Activated B cell treated with CpG ODN at 0.5 μM for 24 hours (primary cell): ENCODE measurements at regions of chr5 and their contacts with region 1.

Region 1: GRCh38 chr5:59620535-59621212 is 272.9 kb downstream of the PDE4D start:
- DNase-seq: no peak
- ATAC-seq: peak; percentile 37
- H3K4me3 Mint-ChIP-seq: no peak overlapping the region
- H3K27ac Mint-ChIP-seq: peak overlapping the region; percentile 14
- H3K4me1 Mint-ChIP-seq: peaks cover 24% of the 10 kb centered on the region
- H3K27me3 Mint-ChIP-seq: no peaks in the 10 kb centered on the region
- CTCF ChIP-seq: no peak

Region 2: GRCh38 chr5:59562756-59563389 is 57.8 kb before region 1 on chr5:
- CTCF ChIA-PET with region 1: no interaction called
- POLR2A ChIA-PET with region 1: no interaction called
- intact Hi-C with region 1: no loop called
- DNase-seq: peak; percentile 60
- ATAC-seq: peak; percentile 91
- H3K4me3 Mint-ChIP-seq: peak overlapping the region; percentile 65
- H3K27ac Mint-ChIP-seq: peak overlapping the region; percentile 91
- H3K4me1 Mint-ChIP-seq: peaks cover 81% of the 10 kb centered on the region
- H3K27me3 Mint-ChIP-seq: no peaks in the 10 kb centered on the region
- CTCF ChIP-seq: no peak

Region 3: GRCh38 chr5:59637878-59638580 is 17.4 kb after region 1 on chr5:
- CTCF ChIA-PET with region 1: no interaction called
- POLR2A ChIA-PET with region 1: no interaction called
- intact Hi-C with region 1: loop called (anchors 2 kb)
- DNase-seq: no peak
- ATAC-seq: no peak
- H3K4me3 Mint-ChIP-seq: no peak overlapping the region
- H3K27ac Mint-ChIP-seq: no peak overlapping the region
- H3K4me1 Mint-ChIP-seq: no peaks in the 10 kb centered on the region
- H3K27me3 Mint-ChIP-seq: no peaks in the 10 kb centered on the region
- CTCF ChIP-seq: no peak